Heart right ventricle (tissue), 16 donors: ENCODE measurements at regions of chr18 and their contacts with region 1.

Region 1: GRCh38 chr18:27005589-27005988 is 140.1 kb upstream of the AQP4 start:
- DNase-seq: no peak
- ATAC-seq: no peak
- H3K4me3 ChIP-seq: no peak overlapping the region
- H3K27ac ChIP-seq: no peak overlapping the region
- H3K4me1 ChIP-seq: no peaks in the 10 kb centered on the region
- H3K27me3 ChIP-seq: peaks cover 0 to 4% (median 0%) of the 10 kb centered on the region in 7 donors
- CTCF ChIP-seq: peak; percentile 2 to 38 (median 20)

Region 2: DNA sequence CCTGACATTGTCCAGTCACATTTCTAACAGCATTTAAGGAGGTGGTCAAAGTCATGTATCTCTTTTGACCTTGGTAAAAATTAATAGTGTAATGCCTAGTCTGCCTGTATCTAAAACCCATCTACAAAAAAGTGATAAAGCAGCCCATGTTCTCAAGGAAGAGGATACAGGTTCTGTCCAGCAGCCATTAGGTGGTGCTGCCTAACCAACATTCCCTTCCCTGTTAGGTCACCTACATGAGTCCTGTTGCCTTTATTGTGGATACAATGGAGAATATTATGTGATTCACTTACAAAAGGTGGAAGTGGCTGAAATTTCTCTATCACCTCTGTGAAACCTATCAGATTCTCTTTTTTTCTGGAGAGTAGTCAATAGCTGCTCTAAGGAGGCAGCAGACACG is 192.5 kb before region 1 on chr18:
- intact Hi-C with region 1: loop called (anchors 5 to 10 kb)
- DNase-seq: peak in 1 of 2 donors; percentile 27
- ATAC-seq: peak in 3 of 8 donors; percentile 73 to 79 (median 78)
- H3K4me3 ChIP-seq: no peak overlapping the region
- H3K27ac ChIP-seq: no peak overlapping the region
- H3K4me1 ChIP-seq: no peaks in the 10 kb centered on the region
- H3K27me3 ChIP-seq: peaks cover 0 to 6% (median 0%) of the 10 kb centered on the region in 7 donors
- CTCF ChIP-seq: peak; percentile 21 to 76 (median 62)